ENCODE measurements at regions of chr1 and their contacts with region 1.

Region 1: GRCh38 chr1:10209905-10210810 is at the start of gene KIF1B:
- DNase-seq: peak; percentile 99
- H3K4me3 ChIP-seq: peak within 1 kb of the TSS; percentile 89 to 95 (median 90)
- H3K27ac ChIP-seq: peak within 1 kb of the TSS; percentile 99 to 100 (median 100)
- H3K4me1 ChIP-seq: peaks cover 0 to 45% (median 38%) of the 10 kb centered on the region in 4 donors
- H3K27me3 ChIP-seq: no peaks in the 10 kb centered on the region
- CTCF ChIP-seq: peak; percentile 97 to 99 (median 98)
- EP300 ChIP-seq: no peak
- POLR2A ChIP-seq: peak; percentile 45 to 75
- total RNA-seq, gene KIF1B: 46.4 to 78.4 (median 52.8) TPM

Region 2: GRCh38 chr1:9606948-9607347 is 603.2 kb before region 1 on chr1:
- intact Hi-C with region 1: no loop called
- DNase-seq: no peak
- H3K4me3 ChIP-seq: no peak overlapping the region
- H3K27ac ChIP-seq: no peak overlapping the region
- H3K4me1 ChIP-seq: no peaks in the 10 kb centered on the region
- H3K27me3 ChIP-seq: no peaks in the 10 kb centered on the region
- CTCF ChIP-seq: no peak
- EP300 ChIP-seq: no peak
- POLR2A ChIP-seq: no peak

Region 3: GRCh38 chr1:10032590-10033358 is 177.4 kb before region 1 on chr1 and contains the start of gene UBE4B:
- intact Hi-C with region 1: loop called (anchors 2 kb)
- DNase-seq: peak; percentile 98
- H3K4me3 ChIP-seq: peak within 1 kb of the TSS; percentile 95 to 97 (median 96)
- H3K27ac ChIP-seq: peak within 1 kb of the TSS; percentile 91 to 98 (median 96)
- H3K4me1 ChIP-seq: peaks cover 0 to 28% (median 21%) of the 10 kb centered on the region in 4 donors
- H3K27me3 ChIP-seq: no peaks in the 10 kb centered on the region
- CTCF ChIP-seq: peak in 3 of 4 experiments; percentile 58 to 75 (median 69)
- EP300 ChIP-seq: no peak
- POLR2A ChIP-seq: peak in 1 of 2 donors; percentile 33
- total RNA-seq, gene UBE4B: 47.8 to 124 (median 59.4) TPM

Region 4: DNA sequence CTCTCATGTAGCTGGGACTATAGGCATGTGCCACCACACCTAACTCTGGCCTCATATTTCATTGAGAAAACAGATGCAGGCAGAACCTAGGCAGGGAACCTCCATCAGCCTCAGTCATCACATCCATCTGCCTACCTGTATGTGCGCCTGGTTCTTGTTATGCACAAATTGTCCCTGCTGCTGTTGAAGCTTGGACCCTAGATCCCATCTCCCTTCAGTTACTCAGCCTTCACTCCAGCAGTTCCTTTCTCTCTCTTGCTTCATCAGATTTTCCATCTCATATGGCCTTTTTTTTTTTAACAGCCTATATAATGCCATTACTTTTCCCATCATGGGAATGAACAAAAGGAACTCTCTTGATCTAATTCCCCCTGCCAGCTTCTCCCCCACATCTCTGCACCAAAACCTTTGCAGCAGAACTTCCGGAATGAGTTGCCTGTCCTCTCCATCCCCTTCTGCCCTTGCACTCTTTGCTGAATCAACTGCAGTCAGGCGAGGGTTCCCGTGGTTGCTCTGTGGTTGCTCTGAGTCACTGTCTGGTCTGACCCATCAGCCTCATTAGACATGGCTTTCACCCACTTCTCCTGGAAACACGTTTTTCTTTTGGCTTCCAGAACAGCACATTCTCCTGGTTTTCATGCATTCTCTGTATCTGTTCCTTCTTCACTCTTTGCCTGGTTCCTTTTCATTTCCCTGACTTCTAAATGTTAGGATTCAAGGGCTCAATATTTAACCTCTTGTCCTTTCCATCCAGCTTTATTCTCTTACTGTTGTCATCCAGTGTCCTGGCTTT is 135.9 kb before region 1 on chr1:
- intact Hi-C with region 1: no loop called
- DNase-seq: no peak
- H3K4me3 ChIP-seq: no peak overlapping the region
- H3K27ac ChIP-seq: peak overlapping the region; percentile 35 to 80 (median 60)
- H3K4me1 ChIP-seq: peaks cover 0 to 43% (median 31%) of the 10 kb centered on the region in 4 donors
- H3K27me3 ChIP-seq: no peaks in the 10 kb centered on the region
- CTCF ChIP-seq: no peak
- EP300 ChIP-seq: no peak
- POLR2A ChIP-seq: no peak

Region 5: GRCh38 chr1:10108134-10108663 is 102.0 kb before region 1 on chr1:
- intact Hi-C with region 1: loop called (anchors 5 kb)
- DNase-seq: no peak
- H3K4me3 ChIP-seq: peak overlapping the region in 1 of 4 donors; percentile 12
- H3K27ac ChIP-seq: peak overlapping the region; percentile 71 to 93 (median 84)
- H3K4me1 ChIP-seq: peaks cover 0 to 41% (median 29%) of the 10 kb centered on the region in 4 donors
- H3K27me3 ChIP-seq: no peaks in the 10 kb centered on the region
- CTCF ChIP-seq: no peak
- EP300 ChIP-seq: peak in 1 of 4 donors; percentile 43
- POLR2A ChIP-seq: no peak

Region 6: GRCh38 chr1:10178597-10179405 is 31.4 kb before region 1 on chr1:
- intact Hi-C with region 1: no loop called
- DNase-seq: no peak
- H3K4me3 ChIP-seq: no peak overlapping the region
- H3K27ac ChIP-seq: no peak overlapping the region
- H3K4me1 ChIP-seq: no peaks in the 10 kb centered on the region
- H3K27me3 ChIP-seq: no peaks in the 10 kb centered on the region
- CTCF ChIP-seq: no peak
- EP300 ChIP-seq: no peak
- POLR2A ChIP-seq: no peak

Region 7: DNA sequence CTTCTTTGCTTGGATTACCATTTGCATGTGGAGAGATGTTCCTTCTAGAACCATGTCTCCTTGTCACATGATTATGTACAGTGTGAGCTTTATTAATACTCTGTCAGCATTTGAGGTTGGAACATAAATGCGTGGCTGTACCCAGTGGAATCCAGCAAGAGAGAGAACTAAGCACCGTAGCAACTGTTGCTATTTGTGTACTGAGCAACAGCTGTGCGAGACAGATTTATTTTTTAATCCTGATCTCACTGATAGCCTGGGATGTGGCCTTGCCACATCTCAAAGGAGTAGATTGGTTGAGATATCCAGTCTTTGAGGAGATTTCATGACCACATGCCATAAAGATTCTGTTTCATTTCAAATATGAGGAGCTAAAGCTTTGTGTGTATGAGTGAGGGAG is 43.6 kb after region 1 on chr1:
- intact Hi-C with region 1: loop called (anchors 5 kb)
- DNase-seq: peak; percentile 65
- H3K4me3 ChIP-seq: no peak overlapping the region
- H3K27ac ChIP-seq: peak overlapping the region; percentile 28 to 77 (median 70)
- H3K4me1 ChIP-seq: peaks cover 0 to 63% (median 40%) of the 10 kb centered on the region in 4 donors
- H3K27me3 ChIP-seq: no peaks in the 10 kb centered on the region
- CTCF ChIP-seq: no peak
- EP300 ChIP-seq: no peak
- POLR2A ChIP-seq: no peak

Region 8: DNA sequence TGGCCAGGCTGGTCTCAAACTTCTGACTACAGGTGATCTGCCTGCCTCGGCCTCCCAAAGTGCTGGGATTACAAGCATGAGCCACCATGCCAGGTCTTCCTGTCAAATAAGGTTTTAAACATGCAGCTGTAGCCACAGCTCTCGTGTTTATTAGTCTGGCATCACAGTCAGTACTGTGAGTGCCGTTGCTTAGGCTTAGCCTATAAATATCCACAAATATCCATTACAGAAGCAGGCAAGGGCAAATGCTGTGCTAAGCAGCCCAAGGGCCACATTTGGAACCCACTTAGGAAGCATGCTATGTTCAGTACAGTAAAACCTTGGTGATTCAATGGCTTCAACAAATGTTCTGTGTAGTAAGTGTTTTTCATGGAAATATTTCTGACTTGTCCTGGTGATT is 76.1 kb after region 1 on chr1:
- intact Hi-C with region 1: loop called (anchors 2 kb)
- DNase-seq: peak; percentile 78
- H3K4me3 ChIP-seq: no peak overlapping the region
- H3K27ac ChIP-seq: peak overlapping the region; percentile 64 to 81 (median 72)
- H3K4me1 ChIP-seq: peaks cover 0 to 34% (median 25%) of the 10 kb centered on the region in 4 donors
- H3K27me3 ChIP-seq: no peaks in the 10 kb centered on the region
- CTCF ChIP-seq: no peak
- EP300 ChIP-seq: peak in 3 of 4 donors; percentile 60 to 83 (median 61)
- POLR2A ChIP-seq: no peak

Region 9: DNA sequence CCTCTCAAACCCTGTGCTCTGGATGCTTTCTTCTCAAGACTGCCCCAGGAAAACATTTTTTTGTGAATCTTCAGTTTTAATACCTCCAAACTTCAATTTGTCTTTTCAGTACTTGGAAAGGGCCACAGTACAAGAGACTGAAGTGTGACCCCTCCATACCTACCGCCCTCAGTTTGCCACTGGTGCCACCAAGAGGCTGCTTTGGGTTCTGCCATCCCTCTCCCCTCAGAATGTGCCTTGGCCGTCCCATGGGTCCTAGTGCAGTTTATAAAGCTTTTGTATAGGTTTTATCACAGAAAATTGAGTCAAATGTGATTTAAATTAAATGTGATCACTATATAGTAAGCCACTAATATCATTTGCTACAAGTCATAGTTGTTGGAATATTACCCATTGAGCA is 127.9 kb after region 1 on chr1:
- intact Hi-C with region 1: loop called (anchors 1 kb)
- DNase-seq: peak; percentile 69
- H3K4me3 ChIP-seq: no peak overlapping the region
- H3K27ac ChIP-seq: no peak overlapping the region
- H3K4me1 ChIP-seq: no peaks in the 10 kb centered on the region
- H3K27me3 ChIP-seq: no peaks in the 10 kb centered on the region
- CTCF ChIP-seq: peak; percentile 24 to 72 (median 54)
- EP300 ChIP-seq: no peak
- POLR2A ChIP-seq: no peak

Region 10: DNA sequence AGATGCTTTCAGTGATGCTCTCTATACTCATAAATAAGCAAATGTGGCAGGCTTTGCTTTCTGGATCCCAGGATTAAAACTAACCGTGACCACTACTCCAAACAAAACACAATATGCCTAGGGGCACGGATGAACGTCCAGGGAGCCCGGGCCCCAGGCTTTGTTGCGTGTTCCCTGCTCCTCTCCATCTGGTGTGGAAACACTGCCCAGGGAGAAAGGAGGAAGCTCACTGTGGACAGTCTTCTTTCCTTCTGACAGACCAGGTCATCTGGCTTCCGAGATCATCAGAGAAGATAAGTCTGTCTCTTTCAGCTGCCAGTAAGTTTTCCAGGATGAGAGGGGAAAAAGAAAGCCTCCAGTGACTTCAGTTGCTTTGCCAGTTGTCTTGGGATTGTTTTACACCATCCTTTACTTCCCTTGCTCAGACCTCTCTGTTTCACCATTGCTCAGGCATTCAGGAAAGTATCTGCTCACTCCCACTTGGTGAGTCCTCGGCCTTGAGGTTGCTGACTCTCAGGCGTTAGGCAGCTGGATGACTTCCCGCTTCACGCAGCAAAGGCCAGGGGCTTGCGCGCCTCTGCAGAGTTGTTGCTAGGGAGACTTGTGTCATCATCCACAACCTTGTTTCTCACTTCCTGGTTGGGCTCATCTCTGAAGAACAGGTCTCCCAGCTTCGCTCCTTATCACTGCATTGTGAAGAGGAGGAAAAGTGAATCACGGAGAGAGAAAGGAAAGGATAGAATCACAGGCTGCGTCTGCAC is 168.1 kb after region 1 on chr1:
- intact Hi-C with region 1: no loop called
- DNase-seq: peak; percentile 69
- H3K4me3 ChIP-seq: no peak overlapping the region
- H3K27ac ChIP-seq: peak overlapping the region; percentile 63 to 73 (median 66)
- H3K4me1 ChIP-seq: peaks cover 0 to 10% (median 3%) of the 10 kb centered on the region in 4 donors
- H3K27me3 ChIP-seq: no peaks in the 10 kb centered on the region
- CTCF ChIP-seq: no peak
- EP300 ChIP-seq: no peak
- POLR2A ChIP-seq: no peak